Heart right ventricle (tissue), 16 donors: ENCODE measurements at regions of chr6 and their contacts with region 1.

Region 1: DNA sequence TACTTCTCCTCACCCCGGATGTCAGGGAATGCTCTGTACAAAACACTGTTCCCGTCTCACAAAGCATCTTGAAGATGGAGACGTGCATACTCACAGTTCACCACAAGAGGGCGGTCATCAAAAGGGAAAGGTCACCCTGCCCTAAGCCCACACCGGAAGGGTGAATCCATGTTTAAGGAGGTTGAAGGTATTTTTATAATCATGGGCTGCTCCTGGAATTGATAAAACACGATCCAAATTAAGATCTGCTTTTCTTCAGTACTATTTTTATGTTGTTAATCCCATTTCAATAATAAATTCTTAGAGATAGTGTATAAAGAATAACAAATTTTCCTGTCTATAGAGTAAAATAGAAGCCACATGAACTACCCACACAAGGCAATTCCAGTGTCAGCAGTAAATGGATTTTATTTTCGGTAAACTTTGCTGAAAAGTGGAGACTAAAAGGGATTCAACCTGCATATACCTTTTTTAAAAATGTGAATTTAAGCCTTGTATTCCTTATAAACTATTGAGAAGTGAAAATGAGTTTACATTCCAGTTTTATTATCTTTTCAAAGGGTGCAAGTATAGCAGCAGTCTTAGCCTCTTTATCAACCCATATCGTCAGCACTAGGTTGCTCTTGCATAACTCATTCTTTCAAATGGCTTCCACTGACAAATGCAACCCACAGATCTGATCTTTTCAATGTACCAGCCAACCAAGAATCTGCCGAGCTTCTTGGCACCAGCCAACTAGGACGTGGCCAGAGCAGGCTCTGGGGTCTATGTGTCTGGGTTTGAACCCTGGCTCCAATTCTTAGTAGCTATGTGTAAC is 79.7 kb upstream of the MBOAT1 start:
- DNase-seq: peak; percentile 24 to 80
- ATAC-seq: peak; percentile 78 to 93 (median 86)
- H3K4me3 ChIP-seq: no peak overlapping the region
- H3K27ac ChIP-seq: no peak overlapping the region
- H3K4me1 ChIP-seq: peaks cover 0 to 9% (median 3%) of the 10 kb centered on the region in 9 donors
- H3K27me3 ChIP-seq: no peaks in the 10 kb centered on the region
- CTCF ChIP-seq: peak; percentile 81 to 96 (median 93)

Region 2: DNA sequence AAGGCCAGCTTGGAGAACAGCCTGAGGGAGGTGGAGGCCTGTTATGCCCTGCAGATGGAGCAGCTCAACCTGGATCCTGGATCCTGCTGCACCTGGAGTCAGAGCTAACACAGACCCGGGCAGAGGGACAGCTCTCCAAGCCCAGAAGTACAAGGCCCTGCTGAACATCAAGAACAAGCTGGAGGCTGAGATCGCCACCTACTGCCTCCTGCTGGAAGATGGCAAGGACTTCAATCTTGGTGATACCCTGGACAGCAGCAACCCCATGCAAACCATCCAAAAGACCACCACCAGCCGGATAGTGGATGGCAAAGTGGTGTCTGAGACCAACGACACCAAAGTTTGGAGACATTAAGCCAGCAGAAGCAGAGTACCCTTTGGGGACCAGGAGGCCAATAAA is 678.3 kb before region 1 on chr6:
- intact Hi-C with region 1: no loop called
- DNase-seq: no peak
- ATAC-seq: no peak
- H3K4me3 ChIP-seq: no peak overlapping the region
- H3K27ac ChIP-seq: no peak overlapping the region
- H3K4me1 ChIP-seq: no peaks in the 10 kb centered on the region
- H3K27me3 ChIP-seq: no peaks in the 10 kb centered on the region
- CTCF ChIP-seq: no peak

Region 3: GRCh38 chr6:20534295-20535262 is 242.6 kb after region 1 on chr6 and contains the start of gene CDKAL1:
- intact Hi-C with region 1: loop called in 9 of 10 experiments (anchors 1 to 5 kb)
- DNase-seq: peak; percentile 87 to 94
- ATAC-seq: peak; percentile 88 to 96 (median 94)
- H3K4me3 ChIP-seq: peak within 1 kb of the TSS; percentile 68 to 100 (median 88)
- H3K27ac ChIP-seq: peak within 1 kb of the TSS in 9 of 10 donors; percentile 72 to 93 (median 84)
- H3K4me1 ChIP-seq: peaks cover 0 to 19% (median 17%) of the 10 kb centered on the region in 9 donors
- H3K27me3 ChIP-seq: no peaks in the 10 kb centered on the region
- CTCF ChIP-seq: no peak
- total RNA-seq, gene CDKAL1: 10.4 to 14.0 (median 11.1) TPM

Region 4: DNA sequence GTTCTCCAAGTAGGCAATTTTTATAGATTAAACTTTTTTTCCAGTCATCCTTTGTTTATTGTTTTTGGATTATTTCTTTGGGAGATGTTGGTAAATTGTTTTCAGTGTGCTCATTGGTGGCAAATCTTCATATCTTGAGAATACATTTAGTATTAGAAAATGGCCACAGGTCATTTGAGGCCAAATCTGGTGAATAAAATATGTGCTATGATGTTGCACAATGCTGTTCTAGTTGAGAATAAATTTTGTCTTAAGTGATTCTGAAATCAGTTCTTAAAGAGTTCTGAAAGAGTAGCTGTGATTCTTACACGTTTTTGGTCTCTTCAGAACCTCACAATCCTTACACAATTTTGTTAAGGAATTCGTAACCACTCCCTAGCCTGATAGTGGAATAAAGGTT is 262.4 kb after region 1 on chr6:
- intact Hi-C with region 1: no loop called
- DNase-seq: no peak
- ATAC-seq: no peak
- H3K4me3 ChIP-seq: no peak overlapping the region
- H3K27ac ChIP-seq: no peak overlapping the region
- H3K4me1 ChIP-seq: no peaks in the 10 kb centered on the region
- H3K27me3 ChIP-seq: no peaks in the 10 kb centered on the region
- CTCF ChIP-seq: no peak